Activated CD8-positive, alpha-beta T cell treated with anti-CD3 and anti-CD28 coated beads for 36 hours (primary cell): ENCODE measurements at regions of chr1 and their contacts with region 1.

Region 1: DNA sequence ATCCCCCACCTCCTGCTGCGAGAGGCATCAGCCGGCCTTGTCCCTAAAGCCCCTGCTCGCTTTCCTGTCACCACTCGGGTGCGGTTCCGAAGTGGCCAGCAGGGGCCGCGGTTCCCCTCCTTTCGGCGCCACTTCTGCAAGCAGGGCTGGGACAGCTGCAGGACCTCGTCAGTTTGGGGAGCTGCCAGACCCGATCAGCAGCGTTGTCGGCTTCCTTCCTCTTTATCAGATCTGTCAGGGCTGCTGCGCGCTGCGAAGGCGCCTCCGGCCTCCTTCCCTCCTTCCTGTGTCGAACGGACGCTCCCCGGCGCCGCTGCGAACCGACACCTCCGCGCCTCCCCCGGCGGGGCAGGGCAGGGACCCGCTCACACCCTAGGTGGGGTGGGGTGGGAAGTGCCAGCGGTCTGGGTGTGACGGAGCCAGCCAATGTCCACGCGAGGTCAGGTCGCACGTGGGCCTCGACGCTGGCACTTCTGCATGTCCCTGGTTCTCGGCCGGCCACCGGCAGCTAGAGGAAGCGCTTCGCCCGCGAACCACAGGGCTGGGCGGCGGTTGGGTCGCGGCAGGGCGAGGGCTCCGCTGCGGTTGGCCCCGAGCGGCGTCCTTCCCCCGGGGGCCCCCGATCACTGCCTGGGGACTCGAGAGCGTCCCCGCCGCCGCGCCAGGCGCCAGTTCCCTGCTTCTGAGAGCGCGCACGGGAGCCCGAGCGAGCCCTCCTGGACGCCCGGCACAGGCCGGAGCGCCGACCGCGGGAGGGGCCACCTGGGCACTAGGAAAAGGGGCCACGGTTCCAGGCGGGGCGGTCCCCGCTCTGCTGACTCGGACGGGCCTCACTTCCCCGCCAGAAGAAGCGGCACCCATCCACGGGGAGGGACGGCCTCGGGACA is 81.8 kb downstream of the RUNX3 start:
- DNase-seq: peak; percentile 96
- ATAC-seq: peak; percentile 96
- H3K4me3 Mint-ChIP-seq: peak overlapping the region; percentile 59
- H3K27ac Mint-ChIP-seq: no peak overlapping the region
- H3K4me1 Mint-ChIP-seq: peaks cover 7% of the 10 kb centered on the region
- H3K27me3 Mint-ChIP-seq: peaks cover 1% of the 10 kb centered on the region
- CTCF ChIP-seq: peak; percentile 94

Region 2: GRCh38 chr1:24897767-24898483 is 49.7 kb after region 1 on chr1:
- CTCF ChIA-PET with region 1: interaction called, 11 read pairs
- POLR2A ChIA-PET with region 1: interaction called, 3 read pairs
- intact Hi-C with region 1: loop called (anchors 10 kb)
- DNase-seq: peak; percentile 78
- ATAC-seq: peak; percentile 45
- H3K4me3 Mint-ChIP-seq: peak overlapping the region; percentile 27
- H3K27ac Mint-ChIP-seq: peak overlapping the region; percentile 42
- H3K4me1 Mint-ChIP-seq: peaks cover 38% of the 10 kb centered on the region
- H3K27me3 Mint-ChIP-seq: no peaks in the 10 kb centered on the region
- CTCF ChIP-seq: peak; percentile 95

Region 3: GRCh38 chr1:25099343-25099951 is 251.2 kb after region 1 on chr1:
- CTCF ChIA-PET with region 1: interaction called, 43 read pairs
- POLR2A ChIA-PET with region 1: no interaction called
- intact Hi-C with region 1: loop called (anchors 5 kb)
- DNase-seq: peak; percentile 87
- ATAC-seq: peak; percentile 74
- H3K4me3 Mint-ChIP-seq: peak overlapping the region; percentile 42
- H3K27ac Mint-ChIP-seq: peak overlapping the region; percentile 76
- H3K4me1 Mint-ChIP-seq: peaks cover 73% of the 10 kb centered on the region
- H3K27me3 Mint-ChIP-seq: no peaks in the 10 kb centered on the region
- CTCF ChIP-seq: no peak

Region 4: GRCh38 chr1:25148673-25149300 is 300.5 kb after region 1 on chr1:
- CTCF ChIA-PET with region 1: interaction called, 25 read pairs
- POLR2A ChIA-PET with region 1: no interaction called
- intact Hi-C with region 1: no loop called
- DNase-seq: peak; percentile 56
- ATAC-seq: peak; percentile 83
- H3K4me3 Mint-ChIP-seq: no peak overlapping the region
- H3K27ac Mint-ChIP-seq: no peak overlapping the region
- H3K4me1 Mint-ChIP-seq: peaks cover 4% of the 10 kb centered on the region
- H3K27me3 Mint-ChIP-seq: peaks cover 16% of the 10 kb centered on the region
- CTCF ChIP-seq: peak; percentile 69

Region 5: GRCh38 chr1:25204797-25205480 is 356.7 kb after region 1 on chr1:
- CTCF ChIA-PET with region 1: interaction called, 73 read pairs
- POLR2A ChIA-PET with region 1: no interaction called
- intact Hi-C with region 1: loop called (anchors 5 kb)
- DNase-seq: peak; percentile 26
- ATAC-seq: peak; percentile 73
- H3K4me3 Mint-ChIP-seq: no peak overlapping the region
- H3K27ac Mint-ChIP-seq: no peak overlapping the region
- H3K4me1 Mint-ChIP-seq: no peaks in the 10 kb centered on the region
- H3K27me3 Mint-ChIP-seq: peaks cover 4% of the 10 kb centered on the region
- CTCF ChIP-seq: peak; percentile 87